Esophagus squamous epithelium (tissue), 5 donors: ENCODE measurements at regions of chr5 and their contacts with region 1.

Region 1: GRCh38 chr5:73215891-73216610 is 43.1 kb downstream of the TMEM174 start:
- DNase-seq: no peak
- H3K4me3 ChIP-seq: peak overlapping the region; percentile 24 to 67 (median 43)
- H3K27ac ChIP-seq: peak overlapping the region in 2 of 4 donors; percentile 20 to 46
- H3K4me1 ChIP-seq: peaks cover 7 to 14% (median 9%) of the 10 kb centered on the region in 3 donors
- H3K27me3 ChIP-seq: peaks cover 0 to 90% (median 4%) of the 10 kb centered on the region in 4 donors
- CTCF ChIP-seq: peak; percentile 66 to 93 (median 86)
- POLR2A ChIP-seq: no peak

Region 2: GRCh38 chr5:72531496-72532190 is 684.4 kb before region 1 on chr5:
- intact Hi-C with region 1: no loop called
- DNase-seq: no peak
- H3K4me3 ChIP-seq: no peak overlapping the region
- H3K27ac ChIP-seq: no peak overlapping the region
- H3K4me1 ChIP-seq: no peaks in the 10 kb centered on the region
- H3K27me3 ChIP-seq: no peaks in the 10 kb centered on the region
- CTCF ChIP-seq: no peak
- POLR2A ChIP-seq: no peak

Region 3: GRCh38 chr5:72955768-72956323 is 260.2 kb before region 1 on chr5 and contains the start of gene FCHO2:
- intact Hi-C with region 1: no loop called
- DNase-seq: peak; percentile 84
- H3K4me3 ChIP-seq: peak within 1 kb of the TSS; percentile 64 to 88 (median 86)
- H3K27ac ChIP-seq: peak within 1 kb of the TSS; percentile 95 to 99 (median 98)
- H3K4me1 ChIP-seq: peaks cover 3 to 72% (median 29%) of the 10 kb centered on the region in 3 donors
- H3K27me3 ChIP-seq: no peaks in the 10 kb centered on the region
- CTCF ChIP-seq: peak; percentile 88 to 99 (median 95)
- POLR2A ChIP-seq: peak in 2 of 4 donors; percentile 71 to 82
- total RNA-seq, gene FCHO2: 30.2 to 41.8 (median 36.6) TPM

Region 4: GRCh38 chr5:73290242-73290641 is 74.2 kb after region 1 on chr5:
- intact Hi-C with region 1: loop called (anchors 5 kb)
- DNase-seq: no peak
- H3K4me3 ChIP-seq: no peak overlapping the region
- H3K27ac ChIP-seq: no peak overlapping the region
- H3K4me1 ChIP-seq: no peaks in the 10 kb centered on the region
- H3K27me3 ChIP-seq: peaks cover 0 to 37% (median 0%) of the 10 kb centered on the region in 4 donors
- CTCF ChIP-seq: no peak
- POLR2A ChIP-seq: no peak

Region 5: DNA sequence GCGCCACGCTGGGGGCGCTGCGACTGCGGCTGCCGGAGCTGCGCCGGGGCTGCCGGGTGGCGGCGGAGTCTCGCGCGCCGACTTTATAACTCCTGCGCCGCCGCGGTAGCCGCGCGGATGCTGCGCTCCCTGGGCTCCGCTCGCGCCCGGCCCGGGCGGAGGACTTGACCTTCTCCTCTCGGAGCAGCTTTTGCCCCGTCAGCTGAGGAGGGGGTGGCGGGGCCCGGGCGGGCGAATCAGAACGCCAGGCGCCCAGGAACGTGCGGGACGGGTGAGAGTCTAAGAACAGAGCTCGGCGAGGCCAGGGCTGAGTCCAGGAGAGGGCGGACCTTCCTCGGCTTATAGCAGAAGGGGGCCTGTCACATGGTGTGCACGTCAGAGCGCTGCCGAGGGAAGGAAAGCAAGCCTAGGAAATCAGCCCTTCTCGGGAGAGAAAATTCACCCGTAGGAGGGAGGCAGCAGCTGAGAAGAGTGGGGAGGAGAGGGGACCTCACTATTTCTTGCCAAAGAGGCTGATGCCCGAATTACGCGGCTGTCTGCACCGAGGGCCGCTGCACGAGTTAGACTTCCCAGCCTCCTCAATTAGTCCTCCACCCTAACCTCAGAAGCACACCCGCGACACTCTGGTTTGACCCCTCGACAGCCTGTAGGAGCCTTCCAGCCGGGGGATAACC is 232.5 kb after region 1 on chr5 and contains the start of gene FOXD1:
- intact Hi-C with region 1: loop called (anchors 2 kb)
- DNase-seq: peak; percentile 10
- H3K4me3 ChIP-seq: peak within 1 kb of the TSS; percentile 39 to 77 (median 52)
- H3K27ac ChIP-seq: peak within 1 kb of the TSS; percentile 72 to 89 (median 79)
- H3K4me1 ChIP-seq: peaks cover 18 to 55% (median 23%) of the 10 kb centered on the region in 3 donors
- H3K27me3 ChIP-seq: peaks cover 25 to 99% (median 55%) of the 10 kb centered on the region in 4 donors
- CTCF ChIP-seq: peak in 1 of 6 experiments; percentile 6
- POLR2A ChIP-seq: peak in 2 of 4 donors; percentile 74 to 83
- total RNA-seq, gene FOXD1: 0.48 to 3.5 (median 1.5) TPM in 3 of 4 donors, not detected in the other